ENCODE measurements at regions of chr1 and their contacts with region 1.

Region 1: GRCh38 chr1:171833091-171833825 is 8.0 kb upstream of the DNM3 start:
- DNase-seq: no peak
- ATAC-seq: no peak
- H3K4me3 ChIP-seq: no peak overlapping the region
- H3K27ac ChIP-seq: no peak overlapping the region
- H3K4me1 ChIP-seq: no peaks in the 10 kb centered on the region
- H3K27me3 ChIP-seq: no peaks in the 10 kb centered on the region
- CTCF ChIP-seq: no peak

Region 2: GRCh38 chr1:171898941-171899340 is 65.7 kb after region 1 on chr1:
- intact Hi-C with region 1: loop called in 1 of 3 experiments (anchors 10 kb)
- DNase-seq: no peak
- ATAC-seq: no peak
- H3K4me3 ChIP-seq: no peak overlapping the region
- H3K27ac ChIP-seq: no peak overlapping the region
- H3K4me1 ChIP-seq: peaks cover 0 to 3% (median 0%) of the 10 kb centered on the region in 3 donors
- H3K27me3 ChIP-seq: no peaks in the 10 kb centered on the region
- CTCF ChIP-seq: no peak

Measured in pancreas (tissue), 10 donors.